ENCODE measurements at regions of chr15 and their contacts with region 1.

Region 1: GRCh38 chr15:81939604-81940440 is 106.0 kb downstream of the MEX3B start:
- DNase-seq: peak; percentile 53
- H3K4me3 ChIP-seq: no peak overlapping the region
- H3K27ac ChIP-seq: no peak overlapping the region
- H3K4me1 ChIP-seq: no peaks in the 10 kb centered on the region
- H3K27me3 ChIP-seq: no peaks in the 10 kb centered on the region
- CTCF ChIP-seq: peak; percentile 72 to 84

Region 2: GRCh38 chr15:81473177-81473576 is 466.6 kb before region 1 on chr15:
- CTCF ChIA-PET with region 1: interaction called, 6 read pairs
- dilution Hi-C with region 1: no loop called
- in situ Hi-C with region 1: loop called in 1 of 2 experiments (anchors 10 kb)
- intact Hi-C with region 1: no loop called
- DNase-seq: no peak
- H3K4me3 ChIP-seq: no peak overlapping the region
- H3K27ac ChIP-seq: no peak overlapping the region
- H3K4me1 ChIP-seq: peaks cover 8% of the 10 kb centered on the region
- H3K27me3 ChIP-seq: no peaks in the 10 kb centered on the region
- CTCF ChIP-seq: no peak

Region 3: DNA sequence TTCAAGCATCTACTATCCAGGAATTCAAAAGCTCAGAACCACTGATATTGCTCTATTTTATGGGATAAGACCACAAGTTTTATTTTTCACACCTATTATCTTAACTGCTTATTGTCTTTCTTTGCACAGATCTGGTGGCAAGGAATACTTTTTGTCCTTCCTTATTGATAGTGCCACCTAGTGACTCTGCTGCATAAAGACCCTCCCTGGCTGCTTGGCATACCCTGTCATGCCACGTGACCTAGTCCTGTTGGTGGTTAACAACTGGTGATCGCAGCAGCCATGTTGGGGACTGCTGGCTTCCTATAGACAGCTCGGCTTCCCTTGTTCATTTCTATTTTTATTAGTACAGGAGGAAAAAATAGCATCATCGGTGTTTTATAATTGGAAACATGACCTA is 130.3 kb before region 1 on chr15:
- CTCF ChIA-PET with region 1: no interaction called
- dilution Hi-C with region 1: no loop called
- in situ Hi-C with region 1: no loop called
- intact Hi-C with region 1: loop called (anchors 2 kb)
- DNase-seq: no peak
- H3K4me3 ChIP-seq: no peak overlapping the region
- H3K27ac ChIP-seq: no peak overlapping the region
- H3K4me1 ChIP-seq: no peaks in the 10 kb centered on the region
- H3K27me3 ChIP-seq: no peaks in the 10 kb centered on the region
- CTCF ChIP-seq: peak in 1 of 2 donors; percentile 29

Region 4: DNA sequence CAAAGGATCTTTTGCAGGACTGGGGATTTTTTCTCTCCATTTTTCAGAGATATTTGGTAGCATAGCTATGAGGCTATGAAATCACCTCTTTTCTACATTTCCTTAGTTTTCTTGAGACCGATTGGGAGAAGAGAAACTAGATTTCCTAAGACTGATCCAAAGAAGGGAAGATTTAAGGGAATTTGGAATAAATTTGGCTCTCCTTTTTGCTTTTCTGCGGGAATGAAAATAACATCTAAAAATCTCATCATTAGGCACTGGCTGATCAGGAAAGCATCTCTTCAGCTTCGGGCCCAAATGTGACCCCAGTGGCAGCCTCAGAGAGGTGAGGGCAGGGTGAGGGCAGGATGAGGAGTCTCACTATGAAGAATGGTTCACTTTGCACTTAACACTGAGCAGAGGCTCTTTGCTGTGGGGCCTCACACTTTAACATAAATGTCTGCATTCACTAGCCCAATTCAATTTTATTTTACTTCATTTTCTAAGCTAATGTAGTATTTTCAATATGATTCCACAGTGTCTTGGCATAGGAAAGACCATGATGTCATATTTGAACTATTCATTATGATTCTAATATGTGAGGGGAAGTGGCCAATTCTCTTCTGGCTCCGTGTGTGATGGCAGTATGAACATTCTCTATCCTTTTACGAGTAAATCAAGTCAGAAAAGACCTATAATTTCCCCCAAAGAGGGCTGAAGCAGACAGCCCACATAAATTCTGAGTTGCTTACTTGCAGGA is 87.2 kb before region 1 on chr15:
- CTCF ChIA-PET with region 1: no interaction called
- dilution Hi-C with region 1: no loop called
- in situ Hi-C with region 1: no loop called
- intact Hi-C with region 1: no loop called
- DNase-seq: no peak
- H3K4me3 ChIP-seq: no peak overlapping the region
- H3K27ac ChIP-seq: no peak overlapping the region
- H3K4me1 ChIP-seq: no peaks in the 10 kb centered on the region
- H3K27me3 ChIP-seq: no peaks in the 10 kb centered on the region
- CTCF ChIP-seq: no peak

Region 5: GRCh38 chr15:82103468-82103867 is 163.6 kb after region 1 on chr15:
- CTCF ChIA-PET with region 1: no interaction called
- dilution Hi-C with region 1: no loop called
- in situ Hi-C with region 1: no loop called
- intact Hi-C with region 1: loop called (anchors 5 kb)
- DNase-seq: no peak
- H3K4me3 ChIP-seq: no peak overlapping the region
- H3K27ac ChIP-seq: no peak overlapping the region
- H3K4me1 ChIP-seq: peaks cover 13% of the 10 kb centered on the region
- H3K27me3 ChIP-seq: no peaks in the 10 kb centered on the region
- CTCF ChIP-seq: peak; percentile 16 to 43

Region 6: DNA sequence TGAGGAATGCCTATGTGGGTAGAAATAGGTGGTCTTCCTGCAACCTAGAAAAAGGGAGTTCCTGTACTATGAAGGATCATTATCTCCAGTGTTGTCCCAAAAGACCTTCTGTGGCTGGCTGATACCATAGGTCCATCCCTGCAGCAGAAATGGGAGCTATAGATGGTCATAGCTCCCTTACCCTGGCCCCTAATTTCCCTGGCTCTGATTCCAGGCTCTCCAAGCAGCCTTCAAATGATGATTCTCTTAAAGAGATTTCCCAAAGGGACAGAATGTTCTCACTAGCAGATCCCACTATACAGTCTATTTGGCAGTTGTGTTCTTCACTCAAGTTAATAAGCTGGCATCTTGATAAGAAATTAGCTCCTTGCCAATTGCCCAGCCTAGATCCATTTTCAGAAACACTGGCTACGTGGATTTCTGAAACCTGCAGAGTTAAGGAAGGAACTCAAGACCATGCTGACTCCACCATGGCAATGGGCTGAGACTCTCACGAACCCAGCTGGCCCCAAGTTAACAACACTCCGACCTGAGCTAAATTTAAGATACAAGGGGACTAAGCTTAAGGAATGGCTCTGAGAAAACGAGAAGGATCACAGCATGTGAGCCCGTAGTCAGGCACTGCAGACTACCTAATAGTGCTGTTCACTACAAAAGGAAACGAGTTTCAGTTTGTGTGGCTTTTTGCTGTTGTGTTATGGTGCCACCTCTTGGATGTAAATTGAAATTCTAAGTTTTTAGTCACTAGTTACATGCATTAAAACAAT is 1060.3 kb after region 1 on chr15:
- CTCF ChIA-PET with region 1: no interaction called
- dilution Hi-C with region 1: no loop called
- in situ Hi-C with region 1: no loop called
- intact Hi-C with region 1: no loop called
- DNase-seq: peak; percentile 63
- H3K4me3 ChIP-seq: peak overlapping the region; percentile 15 to 39 (median 38)
- H3K27ac ChIP-seq: no peak overlapping the region
- H3K4me1 ChIP-seq: peaks cover 4% of the 10 kb centered on the region
- H3K27me3 ChIP-seq: no peaks in the 10 kb centered on the region
- CTCF ChIP-seq: peak; percentile 49 to 64